ENCODE measurements at regions of chr1 and their contacts with region 1.

Region 1: DNA sequence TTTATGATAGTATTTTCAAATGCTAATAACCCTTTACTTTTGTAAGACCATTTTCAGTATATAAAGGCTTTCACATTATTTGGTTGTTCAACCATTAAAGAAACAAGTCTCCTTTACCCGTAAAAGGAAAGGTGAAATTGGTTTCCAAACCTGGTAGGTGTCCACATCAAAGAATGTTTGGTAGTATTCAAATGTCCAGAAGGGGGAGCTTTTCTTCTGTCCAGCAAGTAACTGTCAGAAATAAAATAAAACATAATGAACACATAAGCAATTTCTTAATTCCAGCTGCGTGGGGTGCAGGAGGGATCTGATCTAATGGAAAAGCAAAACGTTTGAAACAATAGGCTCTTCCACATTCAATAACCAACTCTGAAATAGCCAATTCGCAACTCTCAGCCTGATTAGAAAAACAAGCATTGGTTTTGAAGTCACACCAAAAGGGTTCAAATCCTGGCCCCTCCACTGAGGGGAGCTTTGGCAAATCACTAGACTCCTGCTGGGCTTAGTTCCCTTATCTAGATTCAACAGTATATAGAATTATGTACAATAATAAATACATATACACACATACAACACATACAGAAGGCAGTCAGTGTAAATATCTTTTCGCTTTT is 11.0 kb downstream of the YIPF1 start:
- DNase-seq: no peak
- H3K4me3 ChIP-seq: no peak overlapping the region
- H3K27me3 ChIP-seq: no peaks in the 10 kb centered on the region
- CTCF ChIP-seq: peak; percentile 67

Region 2: GRCh38 chr1:53860967-53861411 is 17.6 kb before region 1 on chr1:
- CTCF ChIA-PET with region 1: interaction called, 43 read pairs
- POLR2A ChIA-PET with region 1: no interaction called
- DNase-seq: no peak
- H3K4me3 ChIP-seq: no peak overlapping the region
- H3K27me3 ChIP-seq: no peaks in the 10 kb centered on the region
- CTCF ChIP-seq: peak; percentile 83

Region 3: GRCh38 chr1:53889304-53890298 is 11.0 kb after region 1 on chr1 and contains the start of gene YIPF1:
- CTCF ChIA-PET with region 1: interaction called, 14 read pairs
- POLR2A ChIA-PET with region 1: no interaction called
- DNase-seq: peak; percentile 48
- H3K4me3 ChIP-seq: peak within 1 kb of the TSS; percentile 89
- H3K27me3 ChIP-seq: no peaks in the 10 kb centered on the region
- CTCF ChIP-seq: no peak
- polyA plus RNA-seq, gene YIPF1: 40.2 and 55.5 TPM in 2 replicates

Region 4: DNA sequence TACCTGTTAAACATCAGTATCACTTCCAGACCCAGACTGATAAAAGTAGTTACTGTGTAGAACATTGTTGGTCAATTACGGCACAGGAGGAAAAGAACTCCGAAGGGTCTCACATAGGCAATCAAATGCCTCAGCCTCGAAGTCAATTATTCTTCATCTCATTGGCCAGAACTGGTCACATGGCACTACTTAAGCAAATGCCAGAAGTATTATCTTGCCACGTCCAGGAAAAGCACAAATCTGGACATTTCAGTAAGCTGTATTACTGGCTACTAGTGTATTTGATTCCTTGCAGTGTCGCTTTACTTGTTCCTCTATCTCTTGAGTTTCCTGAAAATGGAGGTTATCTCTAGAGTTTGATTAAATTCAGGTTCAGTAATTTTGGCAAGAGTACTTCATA is 39.7 kb after region 1 on chr1:
- CTCF ChIA-PET with region 1: no interaction called
- POLR2A ChIA-PET with region 1: no interaction called
- DNase-seq: no peak
- H3K4me3 ChIP-seq: no peak overlapping the region
- H3K27me3 ChIP-seq: no peaks in the 10 kb centered on the region
- CTCF ChIP-seq: no peak

Region 5: DNA sequence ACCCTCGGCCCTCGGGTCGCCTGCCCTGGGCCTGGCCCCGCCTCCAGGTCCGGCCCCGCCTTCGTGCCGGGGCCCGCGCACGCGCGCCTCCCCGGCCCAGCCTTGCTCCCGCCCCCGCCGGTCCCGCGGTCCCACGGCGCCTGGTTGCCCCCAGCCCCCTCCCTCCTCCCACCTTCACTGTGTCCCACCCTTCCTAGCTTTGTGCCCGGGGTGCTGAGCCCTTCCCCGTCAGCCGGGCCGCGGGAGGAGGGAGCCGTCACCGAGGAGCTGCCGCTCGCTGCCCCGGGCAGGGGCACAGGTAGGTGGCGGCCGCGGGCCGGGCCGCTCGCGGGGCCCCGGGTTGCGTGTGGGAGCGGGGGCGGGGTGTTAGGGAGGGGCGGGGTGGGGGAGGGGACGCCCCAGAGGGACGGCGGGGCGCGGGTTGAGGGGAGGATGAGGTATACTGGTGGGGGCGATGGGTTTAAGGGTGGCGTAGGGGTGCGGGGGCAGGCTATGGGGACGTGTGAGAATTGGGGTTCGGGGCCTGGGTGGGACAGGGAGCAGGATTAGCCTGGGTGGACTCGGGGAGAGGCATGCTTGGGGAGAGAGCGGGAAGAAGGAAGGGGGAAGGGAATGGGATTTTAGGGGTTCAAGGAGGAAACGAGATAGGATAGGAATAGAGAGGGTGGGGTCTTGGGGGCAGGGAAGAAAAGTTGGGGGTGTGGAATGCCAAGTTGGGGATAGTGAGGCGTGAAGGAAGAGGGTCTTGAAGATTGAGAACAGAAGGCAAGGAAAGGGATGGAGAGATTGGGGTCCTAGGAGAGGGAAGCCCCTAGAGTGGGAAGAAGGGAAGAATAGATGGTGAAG is 67.9 kb after region 1 on chr1 and contains the start of gene LRRC42:
- CTCF ChIA-PET with region 1: interaction called, 41 read pairs
- POLR2A ChIA-PET with region 1: no interaction called
- DNase-seq: no peak
- H3K4me3 ChIP-seq: peak within 1 kb of the TSS; percentile 98
- H3K27me3 ChIP-seq: no peaks in the 10 kb centered on the region
- CTCF ChIP-seq: peak; percentile 23; the same call in 1 of the 2 replicates
- polyA plus RNA-seq, gene LRRC42: 52.9 and 54.6 TPM in 2 replicates

Region 6: DNA sequence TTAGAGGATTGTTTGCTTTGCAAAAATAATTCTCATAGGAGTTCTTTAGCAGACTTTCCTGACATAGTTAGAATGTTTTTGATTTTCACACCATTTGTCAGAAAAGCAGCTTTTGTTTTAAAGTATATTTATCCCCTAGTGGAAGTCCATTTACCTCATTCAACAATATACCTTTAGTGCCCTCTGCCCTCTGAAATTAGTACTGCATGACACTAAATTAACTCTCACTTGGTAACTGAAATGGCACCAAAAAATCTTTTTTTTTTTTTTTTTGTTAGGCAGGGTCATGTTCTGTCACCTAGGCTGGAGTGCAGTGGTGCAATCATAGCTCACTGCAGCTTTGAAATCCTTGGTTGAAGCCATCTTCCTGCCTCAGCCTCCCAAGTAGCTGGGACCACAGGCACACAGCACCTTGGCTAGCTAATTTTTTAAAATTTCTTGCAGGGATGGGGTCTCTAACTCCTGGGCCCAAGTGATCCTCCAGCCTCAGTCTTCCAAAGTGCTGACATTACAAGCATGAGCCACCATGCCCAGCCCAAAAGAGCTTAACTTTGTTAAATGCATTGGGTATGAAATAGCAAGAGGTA is 81.2 kb after region 1 on chr1:
- CTCF ChIA-PET with region 1: interaction called, 50 read pairs
- POLR2A ChIA-PET with region 1: no interaction called
- DNase-seq: no peak
- H3K4me3 ChIP-seq: no peak overlapping the region
- H3K27me3 ChIP-seq: no peaks in the 10 kb centered on the region
- CTCF ChIP-seq: peak; percentile 43

Measured in BJ (cell line).